ENCODE measurements at regions of chr5 and their contacts with region 1.

Region 1: DNA sequence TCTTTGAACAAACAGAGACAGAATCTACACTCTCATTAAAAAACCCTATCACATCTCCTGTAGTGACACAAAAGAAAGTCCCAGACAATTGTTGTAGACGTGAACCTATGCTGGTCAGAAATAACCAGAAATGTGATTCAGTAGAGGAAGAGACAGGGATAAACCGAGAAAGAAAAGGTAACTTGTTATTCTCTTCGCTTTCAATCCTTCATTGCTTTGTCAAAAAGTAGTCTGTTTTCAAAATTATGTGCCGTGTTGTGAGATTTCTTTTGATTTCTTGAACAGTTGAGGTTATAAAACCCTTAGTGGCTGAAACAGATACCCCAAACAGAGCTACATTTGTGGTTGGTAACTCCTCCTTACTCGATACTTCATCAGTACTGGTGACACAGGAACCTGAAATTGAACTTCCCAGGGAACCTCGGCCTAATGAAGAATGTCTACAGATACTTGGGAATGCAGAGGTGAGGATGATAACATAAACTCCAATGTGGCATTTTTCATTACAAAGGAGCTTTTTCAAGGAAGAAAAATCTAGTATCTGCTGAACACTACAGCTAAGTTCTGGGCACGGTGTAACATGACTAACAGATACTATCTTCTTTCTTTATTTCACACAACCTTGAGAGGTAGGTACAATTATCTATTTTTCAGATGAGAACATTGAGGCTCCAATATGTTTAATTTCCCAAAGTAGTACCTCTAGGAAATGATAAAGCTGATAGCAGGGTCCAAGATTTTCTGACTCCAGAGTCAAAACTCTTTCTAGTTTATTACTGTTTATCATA is 14.3 kb downstream of the HMGCR start:
- DNase-seq: no peak
- ATAC-seq: peak; percentile 90
- H3K4me3 Mint-ChIP-seq: no peak overlapping the region
- H3K27ac Mint-ChIP-seq: peak overlapping the region; percentile 78
- H3K4me1 Mint-ChIP-seq: peaks cover 16% of the 10 kb centered on the region
- H3K27me3 Mint-ChIP-seq: no peaks in the 10 kb centered on the region

Region 2: GRCh38 chr5:74342948-74343682 is 1008.2 kb before region 1 on chr5:
- CTCF ChIA-PET with region 1: no interaction called
- POLR2A ChIA-PET with region 1: no interaction called
- intact Hi-C with region 1: no loop called
- DNase-seq: no peak
- ATAC-seq: no peak
- H3K4me3 Mint-ChIP-seq: no peak overlapping the region
- H3K27ac Mint-ChIP-seq: no peak overlapping the region
- H3K4me1 Mint-ChIP-seq: no peaks in the 10 kb centered on the region
- H3K27me3 Mint-ChIP-seq: peaks cover 5% of the 10 kb centered on the region

Region 3: GRCh38 chr5:75320341-75320740 is 31.0 kb before region 1 on chr5:
- CTCF ChIA-PET with region 1: interaction called, 3 read pairs
- POLR2A ChIA-PET with region 1: interaction called, 4 read pairs
- intact Hi-C with region 1: loop called in 1 of 2 experiments (anchors 2 kb)
- DNase-seq: no peak
- ATAC-seq: no peak
- H3K4me3 Mint-ChIP-seq: no peak overlapping the region
- H3K27ac Mint-ChIP-seq: no peak overlapping the region
- H3K4me1 Mint-ChIP-seq: peaks cover 23% of the 10 kb centered on the region
- H3K27me3 Mint-ChIP-seq: no peaks in the 10 kb centered on the region

Measured in activated CD4-positive, alpha-beta T cell treated with anti-CD3 and anti-CD28 coated beads for 36 hours (primary cell).